Activated CD4-positive, alpha-beta memory T cell treated with anti-CD3 and anti-CD28 coated beads for 36 hours (primary cell): ENCODE measurements at regions of chr12 and their contacts with region 1.

Region 1: GRCh38 chr12:49776413-49776812 is 35.1 kb downstream of the TMBIM6 start:
- DNase-seq: peak; percentile 79
- H3K4me3 Mint-ChIP-seq: no peak overlapping the region
- H3K27ac Mint-ChIP-seq: no peak overlapping the region
- H3K4me1 Mint-ChIP-seq: peaks cover 13% of the 10 kb centered on the region
- H3K27me3 Mint-ChIP-seq: peaks cover 14% of the 10 kb centered on the region

Region 2: DNA sequence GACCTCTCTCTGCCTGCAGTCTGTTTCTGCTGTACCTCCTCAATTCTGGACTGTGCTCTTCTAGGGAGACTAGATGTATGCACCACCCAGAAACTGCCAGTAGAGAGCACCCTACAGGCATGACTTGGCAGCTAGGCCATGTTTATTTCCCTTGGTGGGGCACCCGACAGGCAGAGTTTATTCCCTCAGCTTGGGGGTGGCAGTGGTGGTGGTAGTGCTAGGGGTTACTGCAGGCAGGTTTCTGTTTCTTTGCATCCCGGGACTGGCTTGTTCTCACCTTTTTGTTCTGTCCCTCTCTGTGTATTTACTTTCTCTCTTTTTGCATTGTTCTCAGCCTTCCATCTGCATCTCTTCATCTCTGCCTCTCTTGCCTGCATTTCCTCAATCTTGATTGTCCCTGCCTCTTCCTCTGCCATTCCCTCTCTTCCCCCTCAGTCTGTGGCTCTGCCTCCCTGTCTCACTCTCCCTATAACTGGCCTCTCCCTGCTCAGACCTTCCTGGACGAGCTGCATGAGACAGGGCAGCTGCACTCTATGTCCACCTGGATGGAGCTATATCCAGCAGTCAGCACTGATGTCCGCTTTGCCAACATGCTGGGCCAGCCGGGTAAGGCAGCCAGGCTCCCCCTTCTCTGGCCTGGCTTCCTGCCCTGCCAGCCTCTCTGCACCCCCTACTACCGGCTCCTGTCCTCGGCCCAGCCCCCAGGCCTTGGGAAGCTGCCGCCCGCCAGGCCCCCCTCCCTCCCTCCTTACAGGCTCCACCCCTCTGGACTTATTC is 139.2 kb before region 1 on chr12:
- CTCF ChIA-PET with region 1: interaction called, 16 read pairs
- POLR2A ChIA-PET with region 1: no interaction called
- intact Hi-C with region 1: no loop called
- DNase-seq: peak; percentile 70
- H3K4me3 Mint-ChIP-seq: no peak overlapping the region
- H3K27ac Mint-ChIP-seq: peak overlapping the region; percentile 7
- H3K4me1 Mint-ChIP-seq: peaks cover 6% of the 10 kb centered on the region
- H3K27me3 Mint-ChIP-seq: no peaks in the 10 kb centered on the region

Region 3: GRCh38 chr12:49707128-49707811 is 69.1 kb before region 1 on chr12 and contains the start of gene FMNL3:
- CTCF ChIA-PET with region 1: interaction called, 13 read pairs
- POLR2A ChIA-PET with region 1: no interaction called
- intact Hi-C with region 1: no loop called
- DNase-seq: peak; percentile 98
- H3K4me3 Mint-ChIP-seq: peak within 1 kb of the TSS; percentile 85
- H3K27ac Mint-ChIP-seq: peak within 1 kb of the TSS; percentile 72
- H3K4me1 Mint-ChIP-seq: peaks cover 43% of the 10 kb centered on the region
- H3K27me3 Mint-ChIP-seq: peaks cover 3% of the 10 kb centered on the region
- total RNA-seq, gene FMNL3: 31.2 to 31.9 TPM

Region 4: GRCh38 chr12:49800421-49801140 is 24.2 kb after region 1 on chr12:
- CTCF ChIA-PET with region 1: interaction called, 12 read pairs
- POLR2A ChIA-PET with region 1: no interaction called
- intact Hi-C with region 1: no loop called
- DNase-seq: no peak
- H3K4me3 Mint-ChIP-seq: no peak overlapping the region
- H3K27ac Mint-ChIP-seq: no peak overlapping the region
- H3K4me1 Mint-ChIP-seq: no peaks in the 10 kb centered on the region
- H3K27me3 Mint-ChIP-seq: no peaks in the 10 kb centered on the region

Region 5: DNA sequence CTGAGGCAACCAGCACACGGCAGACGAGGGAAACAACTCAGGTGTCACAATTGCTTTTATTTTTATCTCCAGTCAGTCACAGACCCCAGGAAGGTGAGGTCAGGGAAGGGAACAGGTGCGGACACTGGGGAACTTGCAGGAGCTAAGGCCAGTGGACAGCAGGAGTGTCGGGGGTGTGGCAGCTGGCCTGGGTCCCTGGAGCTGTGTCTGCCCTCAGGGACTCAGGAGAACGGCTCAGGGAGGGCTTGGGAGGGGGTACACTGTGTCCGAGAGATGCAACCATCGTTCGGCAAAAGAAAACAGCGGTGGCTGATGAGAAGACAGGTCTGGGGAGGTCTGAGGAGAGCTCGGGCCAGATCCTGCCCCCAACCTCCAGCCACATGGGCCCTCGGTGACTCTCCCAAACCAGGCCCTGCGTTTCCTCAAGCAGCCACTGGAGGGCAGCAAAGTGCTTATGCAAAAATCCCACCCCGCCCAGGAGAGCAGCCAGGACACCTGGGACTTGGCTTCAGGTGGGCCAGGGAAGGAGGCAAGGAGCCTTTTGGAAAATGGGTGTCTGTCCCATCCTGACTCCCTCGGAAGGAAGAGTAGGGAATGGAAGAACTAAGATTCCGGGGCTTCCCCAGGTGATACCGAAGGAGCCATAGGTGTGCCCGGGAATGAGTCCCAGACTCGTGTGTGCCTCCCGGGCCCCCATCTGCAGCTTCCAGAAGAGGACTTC is 90.6 kb after region 1 on chr12:
- CTCF ChIA-PET with region 1: interaction called, 15 read pairs
- POLR2A ChIA-PET with region 1: no interaction called
- intact Hi-C with region 1: no loop called
- DNase-seq: peak; percentile 83
- H3K4me3 Mint-ChIP-seq: no peak overlapping the region
- H3K27ac Mint-ChIP-seq: no peak overlapping the region
- H3K4me1 Mint-ChIP-seq: no peaks in the 10 kb centered on the region
- H3K27me3 Mint-ChIP-seq: no peaks in the 10 kb centered on the region

Region 6: DNA sequence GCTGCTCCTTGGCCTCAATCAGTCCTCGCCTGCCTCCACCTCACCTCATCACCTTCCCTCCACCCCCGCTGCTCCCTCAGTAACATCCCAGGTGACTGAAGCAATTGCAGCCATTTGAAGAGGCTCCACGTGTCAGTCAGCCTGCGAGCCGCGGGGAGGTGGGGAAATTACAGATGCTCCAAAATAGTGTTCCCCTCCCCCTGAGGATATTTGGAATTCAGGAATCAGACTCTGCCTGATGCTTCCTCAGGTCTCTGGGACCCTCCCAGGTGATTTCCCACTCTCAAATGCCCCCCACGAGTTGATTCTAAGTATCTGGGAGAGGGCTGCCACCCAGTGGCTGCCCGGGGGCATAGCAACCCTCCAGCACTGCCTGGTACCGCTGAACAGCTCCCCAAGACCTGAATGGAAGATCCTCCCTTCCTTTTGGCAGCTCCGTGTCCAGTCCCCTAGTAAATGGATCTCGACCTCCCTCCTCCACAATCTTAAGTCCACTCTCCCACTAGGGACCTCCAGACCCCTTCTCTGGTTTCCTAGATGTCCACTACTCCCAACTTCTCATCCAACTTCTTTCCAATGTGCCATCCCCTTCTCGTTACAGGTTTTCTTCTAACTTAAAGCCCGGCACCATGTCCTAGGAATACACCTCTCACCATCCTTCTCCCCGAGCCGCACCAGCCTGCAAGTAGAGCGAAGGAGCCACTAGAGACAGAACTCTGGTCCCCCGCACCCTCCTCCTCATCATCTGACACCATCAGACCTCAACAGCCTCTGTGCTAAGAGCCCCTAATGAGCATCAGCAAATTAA is 279.6 kb after region 1 on chr12:
- CTCF ChIA-PET with region 1: no interaction called
- POLR2A ChIA-PET with region 1: no interaction called
- intact Hi-C with region 1: loop called (anchors 1 kb)
- DNase-seq: peak; percentile 71
- H3K4me3 Mint-ChIP-seq: peak overlapping the region; percentile 31
- H3K27ac Mint-ChIP-seq: no peak overlapping the region
- H3K4me1 Mint-ChIP-seq: peaks cover 24% of the 10 kb centered on the region
- H3K27me3 Mint-ChIP-seq: peaks cover 48% of the 10 kb centered on the region